Activated B cell treated with CpG ODN at 0.5 μM for 24 hours (primary cell): ENCODE measurements at regions of chr7 and their contacts with region 1.

Region 1: DNA sequence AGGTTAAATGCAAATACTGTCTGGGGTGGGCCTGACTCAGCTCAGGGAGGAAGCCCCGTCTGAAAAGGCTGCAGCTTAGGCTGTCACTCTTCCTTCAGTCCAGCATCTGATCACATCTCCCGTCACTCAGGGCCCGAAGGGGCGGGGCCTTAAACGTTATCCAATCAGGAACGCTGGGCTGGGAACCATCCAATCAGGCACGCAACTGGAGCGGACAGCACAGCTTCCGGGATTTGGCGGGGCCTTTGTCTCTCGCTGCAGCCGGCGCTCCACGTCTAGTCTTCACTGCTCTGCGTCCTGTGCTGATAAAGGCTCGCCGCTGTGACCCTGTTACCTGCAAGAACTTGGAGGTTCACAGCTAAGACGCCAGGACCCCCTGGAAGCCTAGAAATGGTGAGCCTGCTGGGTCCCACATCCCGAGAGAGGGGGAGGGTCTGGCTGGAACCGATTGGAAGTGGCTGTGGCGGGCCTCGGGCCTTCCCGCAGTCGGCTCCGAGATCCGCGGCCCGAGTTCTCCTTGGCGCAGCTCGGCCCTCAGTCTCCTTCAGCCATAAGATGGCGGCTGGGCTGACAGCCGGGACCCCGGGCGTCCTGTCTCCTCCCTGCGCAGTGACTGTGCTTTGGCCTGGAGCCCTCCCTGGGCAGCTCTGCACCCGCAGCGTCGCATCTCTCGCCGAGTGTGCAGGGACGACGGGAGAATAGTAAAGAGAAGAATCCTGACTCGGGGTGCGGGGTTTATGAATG is at the start of gene ZNF92:
- DNase-seq: peak; percentile 91
- ATAC-seq: peak; percentile 97
- H3K4me3 Mint-ChIP-seq: peak within 1 kb of the TSS; percentile 96
- H3K27ac Mint-ChIP-seq: peak within 1 kb of the TSS; percentile 91
- H3K4me1 Mint-ChIP-seq: peaks cover 49% of the 10 kb centered on the region
- H3K27me3 Mint-ChIP-seq: no peaks in the 10 kb centered on the region
- CTCF ChIP-seq: no peak
- total RNA-seq, gene ZNF92: 24.6 and 27.1 TPM in 2 replicates

Region 2: GRCh38 chr7:64562626-64563275 is 811.0 kb before region 1 on chr7 and contains the start of gene ZNF680:
- CTCF ChIA-PET with region 1: no interaction called
- POLR2A ChIA-PET with region 1: interaction called, 4 read pairs
- intact Hi-C with region 1: loop called (anchors 10 kb)
- DNase-seq: peak; percentile 75
- ATAC-seq: peak; percentile 100
- H3K4me3 Mint-ChIP-seq: peak within 1 kb of the TSS; percentile 99
- H3K27ac Mint-ChIP-seq: peak within 1 kb of the TSS; percentile 93
- H3K4me1 Mint-ChIP-seq: peaks cover 28% of the 10 kb centered on the region
- H3K27me3 Mint-ChIP-seq: no peaks in the 10 kb centered on the region
- CTCF ChIP-seq: no peak
- total RNA-seq, gene ZNF680: 17.1 and 22.0 TPM in 2 replicates

Region 3: DNA sequence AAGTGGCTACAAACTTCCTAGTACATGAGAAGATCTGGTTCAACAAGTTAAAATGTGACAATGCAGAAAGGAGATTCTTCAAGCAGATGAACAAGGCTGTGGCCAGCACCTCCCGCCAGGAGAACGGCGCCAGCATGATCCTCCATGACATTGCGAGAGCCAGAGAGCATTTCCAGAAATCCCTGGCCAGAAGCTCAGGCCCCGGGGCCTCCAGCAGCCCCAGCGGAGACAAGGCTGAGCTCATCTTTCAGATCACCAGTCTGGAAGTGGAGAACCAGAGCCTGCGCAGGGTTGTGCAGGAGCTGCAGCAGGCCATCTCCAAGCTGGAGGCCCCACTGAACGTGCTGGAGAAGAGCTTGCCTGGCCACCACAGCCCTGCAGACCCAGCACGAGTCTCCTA is 510.8 kb before region 1 on chr7:
- CTCF ChIA-PET with region 1: no interaction called
- POLR2A ChIA-PET with region 1: no interaction called
- intact Hi-C with region 1: no loop called
- DNase-seq: no peak
- ATAC-seq: no peak
- H3K4me3 Mint-ChIP-seq: no peak overlapping the region
- H3K27ac Mint-ChIP-seq: no peak overlapping the region
- H3K4me1 Mint-ChIP-seq: no peaks in the 10 kb centered on the region
- H3K27me3 Mint-ChIP-seq: peaks cover 2% of the 10 kb centered on the region
- CTCF ChIP-seq: no peak

Region 4: DNA sequence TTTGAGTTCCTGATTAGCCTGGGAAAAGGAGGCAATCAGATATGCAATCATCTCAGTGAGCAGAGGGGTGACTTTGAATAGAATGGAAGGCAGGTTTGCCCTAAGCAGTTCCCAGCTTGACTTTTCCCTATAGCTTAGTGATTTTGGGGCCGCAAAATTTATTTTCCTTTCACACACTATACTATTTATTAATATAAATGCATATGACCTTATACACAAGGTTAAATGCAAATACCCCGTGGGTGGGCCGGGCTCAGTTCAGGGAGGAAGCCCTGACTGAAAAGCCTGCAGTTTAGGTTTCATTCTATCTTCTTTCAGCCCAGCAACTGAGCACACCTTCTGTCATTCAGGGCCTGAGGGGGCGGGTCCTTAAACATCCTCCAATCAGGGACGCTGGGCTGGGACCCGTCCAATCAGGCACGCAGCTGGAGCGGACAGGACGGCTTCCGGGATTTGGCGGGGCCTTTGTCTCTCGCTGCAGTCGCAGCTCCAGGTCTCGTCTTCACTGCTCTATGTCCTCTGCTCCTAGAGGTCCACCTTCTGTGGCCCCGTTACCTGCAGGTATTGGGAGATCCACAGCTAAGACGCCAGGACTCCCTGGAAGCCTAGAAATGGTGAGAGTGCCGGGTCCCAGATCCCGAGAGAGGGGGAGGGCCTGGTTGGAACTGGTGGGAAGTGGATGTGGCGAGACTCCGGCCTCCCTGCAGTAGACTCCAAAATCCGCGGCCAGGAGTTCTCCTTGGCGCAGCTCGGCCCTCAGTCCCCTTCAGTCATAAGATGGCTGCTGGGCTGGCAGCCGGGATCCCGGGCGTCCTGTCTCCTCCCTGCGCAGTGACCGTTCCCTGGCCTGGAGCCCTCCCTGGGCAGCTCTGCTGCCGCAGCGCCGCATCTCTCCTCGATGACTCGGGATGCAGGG is 470.7 kb before region 1 on chr7 and contains the start of gene ZNF273:
- CTCF ChIA-PET with region 1: no interaction called
- POLR2A ChIA-PET with region 1: interaction called, 3 read pairs
- intact Hi-C with region 1: loop called (anchors 1 kb)
- DNase-seq: peak; percentile 72
- ATAC-seq: peak; percentile 100
- H3K4me3 Mint-ChIP-seq: peak within 1 kb of the TSS; percentile 97
- H3K27ac Mint-ChIP-seq: peak within 1 kb of the TSS; percentile 91
- H3K4me1 Mint-ChIP-seq: peaks cover 52% of the 10 kb centered on the region
- H3K27me3 Mint-ChIP-seq: no peaks in the 10 kb centered on the region
- CTCF ChIP-seq: no peak
- total RNA-seq, gene ZNF273: 10.6 and 12.3 TPM in 2 replicates

Region 5: GRCh38 chr7:65390588-65390987 is 16.8 kb after region 1 on chr7:
- CTCF ChIA-PET with region 1: no interaction called
- POLR2A ChIA-PET with region 1: interaction called, 4 read pairs
- intact Hi-C with region 1: loop called (anchors 2 kb)
- DNase-seq: no peak
- ATAC-seq: no peak
- H3K4me3 Mint-ChIP-seq: no peak overlapping the region
- H3K27ac Mint-ChIP-seq: peak overlapping the region; percentile 67
- H3K4me1 Mint-ChIP-seq: peaks cover 69% of the 10 kb centered on the region
- H3K27me3 Mint-ChIP-seq: no peaks in the 10 kb centered on the region
- CTCF ChIP-seq: no peak

Region 6: DNA sequence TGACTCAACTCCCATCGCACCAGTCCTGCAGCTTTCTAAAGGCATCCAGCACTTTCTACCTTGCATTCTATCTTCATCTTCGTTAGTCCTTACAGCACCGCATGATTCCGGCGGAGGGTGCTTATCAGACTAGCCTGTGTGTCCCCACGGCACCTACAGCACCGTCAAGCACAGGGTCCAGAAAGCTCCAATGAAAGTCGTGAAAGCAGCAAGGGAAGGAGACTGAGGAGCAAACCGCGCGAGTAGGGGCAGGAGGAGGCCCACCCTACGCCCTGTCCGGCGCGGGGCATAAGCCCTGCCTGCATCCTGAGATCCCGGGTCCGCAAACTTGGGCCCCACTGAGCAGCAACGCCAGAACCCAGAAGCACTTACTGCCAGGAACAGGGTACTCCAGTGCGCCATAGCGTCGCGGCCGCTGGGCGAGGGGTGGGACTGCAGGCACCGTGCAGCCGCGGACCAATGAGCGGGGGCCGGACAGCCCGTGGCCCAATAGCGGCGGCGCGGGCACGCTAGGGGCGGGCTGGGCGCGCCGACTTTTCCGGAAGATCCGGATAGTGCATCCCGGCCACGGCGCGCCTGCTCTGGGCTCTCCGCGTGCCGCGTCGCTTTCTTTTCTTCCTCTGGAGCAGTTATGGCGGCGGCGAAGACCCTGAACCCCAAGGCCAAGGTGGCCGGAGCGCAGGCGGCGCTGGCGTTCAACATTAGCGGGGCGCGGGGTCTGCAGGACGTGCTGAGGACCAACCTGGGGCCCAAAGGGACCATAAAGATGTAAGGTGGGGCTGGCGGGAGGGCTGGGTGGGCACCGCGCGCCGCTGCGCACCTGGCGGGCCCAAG is 376.9 kb after region 1 on chr7:
- CTCF ChIA-PET with region 1: no interaction called
- POLR2A ChIA-PET with region 1: interaction called, 4 read pairs
- intact Hi-C with region 1: loop called (anchors 1 kb)
- DNase-seq: peak; percentile 83
- ATAC-seq: peak; percentile 99
- H3K4me3 Mint-ChIP-seq: peak overlapping the region; percentile 96
- H3K27ac Mint-ChIP-seq: peak overlapping the region; percentile 94
- H3K4me1 Mint-ChIP-seq: peaks cover 15% of the 10 kb centered on the region
- H3K27me3 Mint-ChIP-seq: no peaks in the 10 kb centered on the region
- CTCF ChIP-seq: no peak